ENCODE measurements at regions of chr4 and their contacts with region 1.

Region 1: GRCh38 chr4:68375667-68376559 is 26.0 kb upstream of the YTHDC1 start:
- DNase-seq: peak; percentile 45
- H3K4me3 Mint-ChIP-seq: peak overlapping the region; percentile 51
- H3K27ac Mint-ChIP-seq: no peak overlapping the region
- H3K4me1 Mint-ChIP-seq: peaks cover 11% of the 10 kb centered on the region
- H3K27me3 Mint-ChIP-seq: peaks cover 2% of the 10 kb centered on the region

Region 2: DNA sequence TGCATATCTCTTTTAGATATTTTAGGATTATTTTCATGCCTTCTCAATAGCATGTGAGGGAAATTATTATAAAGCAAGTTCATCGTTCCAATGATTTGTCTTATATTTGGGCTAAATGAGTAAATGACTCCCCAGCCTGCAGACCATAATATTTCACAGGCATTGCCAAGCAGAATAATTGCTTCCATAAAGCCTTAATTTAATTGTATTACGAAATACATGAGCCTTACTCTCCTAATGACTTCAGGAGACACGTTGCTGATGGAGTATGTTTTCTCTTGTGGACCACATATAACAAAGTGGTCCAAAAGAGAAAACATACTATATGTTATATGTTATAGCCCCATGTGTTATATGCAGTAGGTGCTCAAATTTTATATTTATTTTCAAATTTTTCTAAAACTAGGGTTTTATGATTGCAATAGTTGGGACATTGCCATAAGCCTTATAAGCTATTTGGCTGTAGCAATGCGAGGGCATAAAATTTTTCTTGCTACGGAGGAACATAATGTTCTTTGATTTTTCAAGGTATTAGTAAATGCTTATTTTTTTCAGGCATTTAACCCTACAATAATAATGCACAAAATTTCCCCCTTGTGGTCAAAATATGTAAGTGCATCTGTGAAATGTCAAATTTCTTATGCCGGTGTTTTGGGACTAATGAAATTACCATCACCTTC is 465.9 kb before region 1 on chr4:
- CTCF ChIA-PET with region 1: no interaction called
- POLR2A ChIA-PET with region 1: no interaction called
- intact Hi-C with region 1: loop called (anchors 10 kb)
- DNase-seq: no peak
- H3K4me3 Mint-ChIP-seq: no peak overlapping the region
- H3K27ac Mint-ChIP-seq: no peak overlapping the region
- H3K4me1 Mint-ChIP-seq: no peaks in the 10 kb centered on the region
- H3K27me3 Mint-ChIP-seq: peaks cover 6% of the 10 kb centered on the region

Region 3: DNA sequence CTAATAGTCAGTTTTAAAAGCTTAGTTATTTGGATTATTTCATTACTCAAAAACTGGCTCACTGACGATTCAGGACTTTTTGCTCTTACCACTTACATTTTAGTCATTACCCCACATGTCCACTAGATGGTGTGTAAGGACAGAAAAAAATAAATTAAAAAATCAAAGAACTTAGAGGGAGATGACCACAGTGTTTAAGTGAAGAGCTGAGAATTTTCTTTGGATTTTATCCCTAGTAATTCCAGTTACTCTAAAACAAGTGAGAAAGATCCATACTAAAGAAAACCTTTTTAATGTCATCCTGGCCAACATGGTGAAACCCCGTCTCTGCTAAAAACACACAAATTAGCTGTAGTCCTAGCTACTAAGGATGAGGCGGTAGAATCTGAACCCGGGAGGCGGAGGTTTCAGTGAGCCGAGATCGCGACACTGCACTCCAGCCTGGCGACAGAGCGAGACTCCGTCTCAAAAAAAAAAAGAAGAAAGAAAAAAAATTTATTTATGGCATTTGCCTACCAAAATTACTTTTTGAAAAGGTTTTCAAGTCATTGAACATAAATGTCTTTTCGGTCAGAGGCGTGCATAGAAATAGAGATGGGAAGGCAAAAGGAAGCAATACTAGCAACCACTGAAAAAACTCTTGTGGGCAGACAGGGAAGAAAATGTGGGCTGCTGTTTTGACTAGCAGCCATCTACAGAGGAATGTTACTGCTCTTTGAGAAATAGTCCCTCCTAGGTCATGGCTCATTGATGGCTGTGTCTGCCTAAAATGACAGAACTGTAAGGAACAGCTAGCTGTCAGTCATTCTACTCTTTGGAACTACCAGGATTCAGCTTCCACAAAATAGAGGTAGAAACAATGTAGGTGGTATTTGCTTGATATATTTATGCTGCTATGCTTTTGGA is 103.8 kb before region 1 on chr4:
- CTCF ChIA-PET with region 1: interaction called, 69 read pairs
- POLR2A ChIA-PET with region 1: interaction called, 4 read pairs
- intact Hi-C with region 1: loop called (anchors 1 kb)
- DNase-seq: no peak
- H3K4me3 Mint-ChIP-seq: peak overlapping the region; percentile 36
- H3K27ac Mint-ChIP-seq: no peak overlapping the region
- H3K4me1 Mint-ChIP-seq: peaks cover 7% of the 10 kb centered on the region
- H3K27me3 Mint-ChIP-seq: peaks cover 1% of the 10 kb centered on the region

Region 4: DNA sequence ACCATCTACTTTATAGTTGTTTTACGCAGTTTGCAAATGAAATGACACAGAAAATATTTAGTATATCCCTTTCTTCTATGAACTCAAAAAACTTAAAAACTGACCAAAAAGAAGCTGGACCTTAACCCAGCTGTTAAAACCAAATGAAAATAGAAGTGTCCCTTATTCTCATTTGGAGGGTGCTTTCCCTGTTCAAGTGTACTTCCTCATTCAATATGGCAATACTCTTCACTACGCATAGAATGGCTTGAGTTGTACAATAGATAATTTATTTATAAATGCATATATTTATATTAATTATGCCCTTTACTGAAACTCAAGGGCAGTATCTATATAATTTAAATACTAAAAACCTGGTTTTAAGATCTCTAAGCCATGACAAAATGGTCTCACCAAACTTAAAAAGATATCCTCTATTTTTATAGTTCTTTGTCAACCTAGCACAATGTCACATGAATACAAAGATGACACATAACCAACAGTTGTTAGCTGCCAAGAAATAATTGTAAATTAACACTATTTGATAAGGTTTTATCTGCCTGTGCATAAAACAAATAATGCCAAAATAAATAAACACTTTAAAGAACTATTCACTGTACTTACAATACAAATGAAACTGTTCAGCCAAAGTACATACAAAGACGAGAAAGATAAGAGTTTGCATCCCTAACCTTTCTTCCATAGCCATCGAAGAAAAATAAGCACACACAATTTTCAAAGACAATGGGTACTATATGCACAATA is 51.2 kb before region 1 on chr4:
- CTCF ChIA-PET with region 1: interaction called, 11 read pairs
- POLR2A ChIA-PET with region 1: no interaction called
- intact Hi-C with region 1: loop called (anchors 10 kb)
- DNase-seq: no peak
- H3K4me3 Mint-ChIP-seq: no peak overlapping the region
- H3K27ac Mint-ChIP-seq: no peak overlapping the region
- H3K4me1 Mint-ChIP-seq: no peaks in the 10 kb centered on the region
- H3K27me3 Mint-ChIP-seq: no peaks in the 10 kb centered on the region

Region 5: DNA sequence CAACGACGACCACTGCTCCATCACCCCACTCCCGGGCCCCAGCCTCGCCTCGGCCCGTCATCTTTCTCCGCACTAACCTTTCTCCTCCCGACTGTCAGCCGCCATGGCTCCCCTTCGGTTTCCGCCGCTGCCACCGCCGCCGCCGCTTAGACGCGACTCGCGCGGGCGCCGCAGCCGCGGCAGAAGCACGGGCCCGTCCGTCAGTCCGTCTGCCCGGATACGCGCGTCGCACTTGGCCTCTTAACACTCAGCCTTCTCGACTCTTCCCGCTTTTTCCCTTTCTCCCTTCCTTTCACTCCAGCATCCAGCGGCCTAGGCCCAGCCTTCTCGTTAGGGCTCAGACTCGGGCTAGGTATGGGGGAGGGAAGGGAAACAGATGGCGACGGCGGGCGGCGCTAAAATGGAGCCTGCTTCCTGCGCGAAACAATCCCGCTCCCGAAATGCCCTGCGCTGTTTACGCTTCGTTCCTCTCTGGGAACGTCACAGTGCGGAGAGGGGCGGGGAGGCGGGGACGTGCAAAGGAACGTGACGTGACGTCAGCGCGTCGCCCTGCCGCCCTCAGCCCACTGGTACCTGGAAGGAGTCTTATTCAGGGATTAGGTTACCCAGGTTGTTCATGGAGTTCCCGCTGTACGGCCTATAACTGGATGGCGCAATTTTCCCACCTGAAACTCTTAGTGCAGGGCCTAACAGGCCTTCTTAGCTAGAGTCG is 26.1 kb before region 1 on chr4 and contains the start of gene YTHDC1:
- CTCF ChIA-PET with region 1: interaction called, 10 read pairs
- POLR2A ChIA-PET with region 1: no interaction called
- intact Hi-C with region 1: loop called (anchors 1 kb)
- DNase-seq: peak; percentile 97
- H3K4me3 Mint-ChIP-seq: peak within 1 kb of the TSS; percentile 97
- H3K27ac Mint-ChIP-seq: peak within 1 kb of the TSS; percentile 98
- H3K4me1 Mint-ChIP-seq: peaks cover 33% of the 10 kb centered on the region
- H3K27me3 Mint-ChIP-seq: no peaks in the 10 kb centered on the region
- total RNA-seq, gene YTHDC1: 66.8 to 68.5 TPM

Region 6: DNA sequence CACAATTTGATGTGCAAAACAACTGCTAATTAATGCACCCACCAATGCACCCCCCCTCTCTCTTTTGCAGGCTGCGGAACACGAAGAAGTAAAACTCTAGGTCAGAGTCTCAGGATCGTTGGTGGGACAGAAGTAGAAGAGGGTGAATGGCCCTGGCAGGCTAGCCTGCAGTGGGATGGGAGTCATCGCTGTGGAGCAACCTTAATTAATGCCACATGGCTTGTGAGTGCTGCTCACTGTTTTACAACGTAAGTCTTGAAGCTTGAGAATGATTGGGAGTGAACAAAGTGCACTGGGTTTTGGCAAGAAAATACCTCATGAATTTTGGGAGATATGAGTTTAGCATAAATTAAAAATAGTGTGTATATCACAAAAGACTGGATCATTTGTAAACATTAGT is 100.3 kb after region 1 on chr4:
- CTCF ChIA-PET with region 1: no interaction called
- POLR2A ChIA-PET with region 1: no interaction called
- intact Hi-C with region 1: no loop called
- DNase-seq: no peak
- H3K4me3 Mint-ChIP-seq: no peak overlapping the region
- H3K27ac Mint-ChIP-seq: no peak overlapping the region
- H3K4me1 Mint-ChIP-seq: no peaks in the 10 kb centered on the region
- H3K27me3 Mint-ChIP-seq: no peaks in the 10 kb centered on the region

Measured in activated CD4-positive, alpha-beta memory T cell treated with anti-CD3 and anti-CD28 coated beads for 36 hours (primary cell).